IMR-90 (cell line): ENCODE measurements at regions of chr13 and their contacts with region 1.

Region 1: DNA sequence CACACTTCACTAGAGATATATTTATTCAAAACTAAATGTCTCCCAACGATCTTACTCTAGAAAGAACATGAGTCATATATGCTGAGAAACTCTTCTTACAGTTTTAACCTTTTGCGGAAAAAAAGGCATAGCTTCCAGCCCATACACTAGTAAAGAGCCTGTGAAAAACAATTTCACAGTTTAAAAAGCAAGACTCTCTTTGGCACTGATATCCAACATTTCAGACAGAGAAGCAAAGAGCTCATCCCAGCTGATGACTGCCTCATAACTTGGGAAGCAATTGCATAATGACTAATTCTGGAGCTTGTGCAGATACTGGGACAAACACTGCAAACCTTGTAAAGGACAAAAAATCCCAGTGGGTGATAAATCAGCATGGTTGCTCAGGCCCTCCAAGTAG is 88.0 kb downstream of the ENOX1 start:
- DNase-seq: peak; percentile 73
- ATAC-seq: peak; percentile 85
- H3K4me3 ChIP-seq: no peak overlapping the region
- H3K27ac ChIP-seq: no peak overlapping the region
- H3K4me1 ChIP-seq: peaks cover 2% of the 10 kb centered on the region; the same call in 1 of the 2 replicates
- H3K27me3 ChIP-seq: peaks cover 2% of the 10 kb centered on the region
- CTCF ChIP-seq: no peak
- POLR2A ChIP-seq: no peak
- RAD21 ChIP-seq: no peak

Region 2: GRCh38 chr13:43686557-43686956 is 12.2 kb before region 1 on chr13:
- CTCF ChIA-PET with region 1: no interaction called
- POLR2A ChIA-PET with region 1: interaction called, 11 read pairs
- dilution Hi-C with region 1: no loop called
- in situ Hi-C with region 1: no loop called
- intact Hi-C with region 1: no loop called
- DNase-seq: peak; percentile 93
- ATAC-seq: peak; percentile 88
- H3K4me3 ChIP-seq: no peak overlapping the region
- H3K27ac ChIP-seq: no peak overlapping the region
- H3K4me1 ChIP-seq: no peaks in the 10 kb centered on the region; the same call in 1 of the 2 replicates
- H3K27me3 ChIP-seq: no peaks in the 10 kb centered on the region
- CTCF ChIP-seq: no peak
- POLR2A ChIP-seq: no peak
- RAD21 ChIP-seq: no peak